ENCODE measurements at regions of chr4 and their contacts with region 1.

Region 1: GRCh38 chr4:47882228-47882627 is 32.2 kb downstream of the NFXL1 start:
- DNase-seq: no peak
- ATAC-seq: no peak
- H3K4me3 ChIP-seq: no peak overlapping the region
- H3K27ac ChIP-seq: no peak overlapping the region
- H3K4me1 ChIP-seq: no peaks in the 10 kb centered on the region
- H3K27me3 ChIP-seq: no peaks in the 10 kb centered on the region
- CTCF ChIP-seq: no peak

Region 2: GRCh38 chr4:48375651-48376293 is 493.5 kb after region 1 on chr4:
- CTCF ChIA-PET with region 1: no interaction called
- POLR2A ChIA-PET with region 1: interaction called, 11 read pairs
- in situ Hi-C with region 1: no loop called
- intact Hi-C with region 1: no loop called
- DNase-seq: peak; percentile 12
- ATAC-seq: peak; percentile 65; the same call in 1 of the 2 replicates
- H3K4me3 ChIP-seq: no peak overlapping the region
- H3K27ac ChIP-seq: no peak overlapping the region
- H3K4me1 ChIP-seq: peaks cover 4% of the 10 kb centered on the region; the same call in 1 of the 2 replicates
- H3K27me3 ChIP-seq: no peaks in the 10 kb centered on the region
- CTCF ChIP-seq: no peak